ENCODE measurements at regions of chr1 and their contacts with region 1.

Region 1: DNA sequence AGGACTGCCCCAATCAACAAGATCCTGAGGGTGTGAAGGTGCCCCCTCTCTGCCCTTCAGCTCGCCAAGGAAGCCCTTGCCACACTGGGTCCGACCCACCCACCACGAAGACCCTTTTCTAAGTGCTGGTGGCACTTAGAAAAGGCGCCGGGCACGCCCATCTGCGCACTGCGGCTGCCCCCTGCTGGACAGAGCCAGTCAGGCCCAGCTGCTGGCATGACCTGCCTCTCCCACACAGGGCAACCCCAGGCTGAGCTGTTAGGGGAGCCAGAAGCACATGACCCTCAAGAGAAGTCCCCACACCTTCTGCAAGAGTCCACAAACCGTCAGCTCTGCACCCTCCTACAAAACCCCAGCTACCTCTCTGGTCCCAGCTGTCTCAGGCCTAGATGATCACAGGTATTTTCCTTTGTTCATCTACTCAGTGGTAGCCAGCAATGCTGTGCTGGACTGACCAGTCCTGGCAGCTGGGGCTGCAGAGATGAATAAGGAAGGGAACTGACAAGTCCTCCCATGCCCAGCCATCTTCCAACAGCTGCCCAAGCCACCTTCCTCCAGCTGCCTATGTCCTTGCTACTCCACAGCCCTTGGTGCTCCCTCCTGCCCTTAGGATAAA is 40.0 kb upstream of the ZC3H12A start:
- DNase-seq: peak; percentile 91
- H3K4me3 Mint-ChIP-seq: no peak overlapping the region
- H3K27ac Mint-ChIP-seq: no peak overlapping the region
- H3K4me1 Mint-ChIP-seq: no peaks in the 10 kb centered on the region
- H3K27me3 Mint-ChIP-seq: peaks cover 10% of the 10 kb centered on the region

Region 2: DNA sequence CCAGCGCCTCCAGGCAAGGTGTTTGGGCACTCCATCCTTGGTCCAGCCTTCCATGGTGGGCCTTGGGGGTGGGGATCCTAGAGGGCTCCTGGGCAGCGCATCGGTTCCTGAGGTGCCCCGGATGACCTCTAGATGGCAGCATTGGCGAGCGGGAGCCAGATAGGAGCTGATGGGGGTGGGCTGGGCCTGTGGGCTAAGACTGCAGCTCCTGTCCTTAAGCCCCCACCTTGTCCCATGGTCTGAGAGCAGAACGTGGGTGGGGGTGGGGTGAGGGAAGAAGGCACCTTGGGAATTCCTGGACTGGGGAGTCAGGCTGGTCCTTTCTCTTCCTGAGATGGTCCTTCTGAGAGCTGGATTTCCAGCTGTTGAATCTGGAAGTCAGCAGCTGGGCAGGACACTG is 858.3 kb before region 1 on chr1:
- intact Hi-C with region 1: loop called (anchors 10 kb)
- DNase-seq: peak; percentile 79
- H3K4me3 Mint-ChIP-seq: no peak overlapping the region
- H3K27ac Mint-ChIP-seq: no peak overlapping the region
- H3K4me1 Mint-ChIP-seq: no peaks in the 10 kb centered on the region
- H3K27me3 Mint-ChIP-seq: peaks cover 10% of the 10 kb centered on the region

Region 3: GRCh38 chr1:36703526-36704208 is 730.7 kb before region 1 on chr1:
- intact Hi-C with region 1: loop called (anchors 2 kb)
- DNase-seq: peak; percentile 91
- H3K4me3 Mint-ChIP-seq: no peak overlapping the region
- H3K27ac Mint-ChIP-seq: no peak overlapping the region
- H3K4me1 Mint-ChIP-seq: no peaks in the 10 kb centered on the region
- H3K27me3 Mint-ChIP-seq: peaks cover 13% of the 10 kb centered on the region

Measured in activated CD4-positive, alpha-beta T cell treated with anti-CD3 and anti-CD28 coated beads, Interleukin-2, amount 10 ng/mL, durations not matched to agents 24 days and 14 days (primary cell).